ENCODE measurements at regions of chr15 and their contacts with region 1.

Region 1: DNA sequence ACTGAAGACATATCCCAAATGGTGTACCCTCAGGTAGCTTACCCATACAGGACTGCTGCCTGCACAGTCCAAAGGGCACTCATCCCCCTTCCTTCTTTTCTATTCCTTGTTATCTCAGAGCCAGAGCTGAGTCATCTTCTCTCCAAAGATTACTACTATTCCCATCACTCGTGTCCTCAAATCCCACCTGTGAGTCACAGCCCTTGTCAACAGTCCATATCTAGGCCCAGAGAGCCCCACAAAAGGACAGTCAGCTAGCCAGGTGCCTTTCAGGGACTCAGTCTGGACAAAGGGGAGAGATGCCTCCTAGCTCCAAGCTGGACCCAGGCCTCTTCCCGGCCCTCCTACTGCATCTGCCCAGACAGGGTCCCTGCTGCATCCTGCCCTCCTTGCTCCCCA is 11.0 kb downstream of the PARP16 start:
- DNase-seq: no peak
- H3K4me3 ChIP-seq: no peak overlapping the region
- H3K27ac ChIP-seq: peak overlapping the region; percentile 21
- H3K27me3 ChIP-seq: no peaks in the 10 kb centered on the region
- CTCF ChIP-seq: no peak

Region 2: DNA sequence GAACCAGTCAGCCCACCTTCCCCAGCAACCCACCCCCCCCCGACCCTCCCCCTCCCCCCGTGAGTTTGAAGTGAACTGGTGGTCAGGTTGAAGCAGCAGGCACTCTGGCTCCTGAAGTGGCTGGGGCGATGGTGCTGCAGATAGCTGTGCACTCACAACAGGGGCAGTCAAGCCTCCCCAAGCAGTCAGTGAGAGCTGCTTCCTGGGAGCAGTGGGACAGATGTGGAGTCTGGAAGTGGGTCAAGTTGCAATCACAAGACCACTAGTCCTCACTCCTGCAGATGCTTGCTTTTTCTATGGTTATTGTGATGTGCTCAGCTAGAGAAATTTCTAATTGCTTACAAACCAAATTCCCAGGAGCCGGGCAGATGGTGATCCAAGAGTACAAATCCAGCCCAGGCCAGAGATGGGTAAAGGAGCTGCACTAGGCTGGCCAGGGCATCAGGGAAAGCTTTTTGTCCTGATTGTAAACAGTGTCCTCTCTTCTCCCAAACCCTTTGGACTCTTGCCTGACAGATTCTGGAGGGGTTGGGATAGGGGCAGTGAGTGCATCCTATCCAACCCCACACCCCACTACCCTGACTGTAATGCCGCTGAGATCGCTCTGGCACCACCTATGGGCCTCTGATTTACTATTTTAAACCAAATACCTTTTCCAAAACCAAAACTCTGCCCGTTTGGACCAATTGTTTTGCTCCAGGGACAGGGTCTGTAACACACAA is 80.7 kb before region 1 on chr15:
- CTCF ChIA-PET with region 1: interaction called, 100 read pairs
- POLR2A ChIA-PET with region 1: no interaction called
- DNase-seq: no peak
- H3K4me3 ChIP-seq: no peak overlapping the region
- H3K27ac ChIP-seq: peak overlapping the region; percentile 24
- H3K27me3 ChIP-seq: peaks cover 15% of the 10 kb centered on the region
- CTCF ChIP-seq: 0 out of 2 replicates have a peak, but pooled peaks have one; percentile 9

Region 3: DNA sequence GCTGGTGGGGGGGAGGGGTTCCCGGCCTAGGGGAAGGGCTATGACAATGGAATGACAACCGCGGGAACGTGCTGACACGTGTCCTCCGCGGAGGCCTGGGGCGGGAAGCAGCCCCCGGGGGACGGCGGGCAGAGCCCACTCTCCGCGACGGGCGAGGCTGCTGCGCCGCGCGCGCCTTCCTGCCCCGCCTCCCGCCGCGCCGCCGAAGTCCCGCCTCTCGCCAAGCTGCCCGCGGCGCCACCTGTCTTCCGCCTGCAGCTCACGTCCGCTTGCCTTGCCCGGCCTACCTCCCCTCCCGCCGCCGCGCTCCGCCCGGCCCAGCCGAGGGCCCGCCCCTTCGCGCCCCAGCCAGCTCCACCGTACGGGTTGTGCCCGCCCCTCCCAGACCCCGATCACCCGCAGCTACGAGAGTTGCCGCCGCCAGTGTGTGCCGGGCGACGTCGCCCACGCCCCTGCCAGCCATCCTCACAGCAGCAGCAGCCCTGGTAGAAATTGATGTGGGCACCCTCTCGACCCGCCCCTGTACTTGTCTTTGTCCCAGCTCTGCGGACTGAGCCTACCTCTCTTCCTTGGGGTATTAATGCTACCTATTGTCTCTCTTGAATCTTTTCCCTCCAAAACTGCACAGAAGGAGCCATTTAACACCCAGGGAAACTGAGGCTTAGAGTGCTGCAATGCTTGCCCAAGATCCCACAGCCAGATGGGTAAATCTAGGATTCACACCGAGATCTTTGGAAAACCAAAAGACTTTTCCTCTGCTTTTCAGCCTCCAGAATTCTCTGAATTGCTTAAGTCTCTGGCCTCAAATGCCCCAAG is 11.2 kb after region 1 on chr15 and contains the start of gene PARP16:
- CTCF ChIA-PET with region 1: interaction called, 43 read pairs
- POLR2A ChIA-PET with region 1: interaction called, 10 read pairs
- DNase-seq: peak; percentile 24
- H3K4me3 ChIP-seq: peak within 1 kb of the TSS; percentile 67
- H3K27ac ChIP-seq: peak within 1 kb of the TSS; percentile 21
- H3K27me3 ChIP-seq: no peaks in the 10 kb centered on the region
- CTCF ChIP-seq: peak; percentile 24; the same call in 1 of the 2 replicates
- polyA plus RNA-seq, gene PARP16: 4.5 and 5.3 TPM in 2 replicates